CD8-positive, alpha-beta T cell (primary cell): ENCODE measurements at regions of chr7 and their contacts with region 1.

Region 1: GRCh38 chr7:44082541-44083207 is 344 bp upstream of the POLM start:
- DNase-seq: peak; percentile 94 to 100 (median 97)
- ATAC-seq: peak; percentile 93
- H3K4me3 ChIP-seq: peak overlapping the region; percentile 51 to 63
- H3K4me3 Mint-ChIP-seq: peak overlapping the region; percentile 88
- H3K27ac ChIP-seq: peak overlapping the region; percentile 54 to 78
- H3K27ac Mint-ChIP-seq: peak overlapping the region; percentile 82
- H3K4me1 ChIP-seq: peaks cover 26% of the 10 kb centered on the region
- H3K4me1 Mint-ChIP-seq: peaks cover 33% of the 10 kb centered on the region
- H3K27me3 ChIP-seq: no peaks in the 10 kb centered on the region
- H3K27me3 Mint-ChIP-seq: no peaks in the 10 kb centered on the region
- CTCF ChIP-seq: no peak

Region 2: GRCh38 chr7:43058271-43059066 is 1024.2 kb before region 1 on chr7:
- CTCF ChIA-PET with region 1: no interaction called
- POLR2A ChIA-PET with region 1: no interaction called
- intact Hi-C with region 1: no loop called
- DNase-seq: no peak
- ATAC-seq: no peak
- H3K4me3 ChIP-seq: no peak overlapping the region
- H3K4me3 Mint-ChIP-seq: no peak overlapping the region
- H3K27ac ChIP-seq: no peak overlapping the region
- H3K27ac Mint-ChIP-seq: no peak overlapping the region
- H3K4me1 ChIP-seq: no peaks in the 10 kb centered on the region
- H3K4me1 Mint-ChIP-seq: no peaks in the 10 kb centered on the region
- H3K27me3 ChIP-seq: no peaks in the 10 kb centered on the region
- H3K27me3 Mint-ChIP-seq: peaks cover 16% of the 10 kb centered on the region
- CTCF ChIP-seq: no peak

Region 3: GRCh38 chr7:44065436-44066118 is 17.1 kb before region 1 on chr7 and contains the start of gene PGAM2:
- CTCF ChIA-PET with region 1: interaction called, 3 read pairs
- POLR2A ChIA-PET with region 1: interaction called, 43 read pairs
- intact Hi-C with region 1: no loop called
- DNase-seq: no peak
- ATAC-seq: peak; percentile 67
- H3K4me3 ChIP-seq: no peak within 1 kb of the TSS
- H3K4me3 Mint-ChIP-seq: no peak within 1 kb of the TSS
- H3K27ac ChIP-seq: no peak within 1 kb of the TSS
- H3K27ac Mint-ChIP-seq: peak within 1 kb of the TSS; percentile 74
- H3K4me1 ChIP-seq: peaks cover 34% of the 10 kb centered on the region
- H3K4me1 Mint-ChIP-seq: peaks cover 38% of the 10 kb centered on the region
- H3K27me3 ChIP-seq: no peaks in the 10 kb centered on the region
- H3K27me3 Mint-ChIP-seq: no peaks in the 10 kb centered on the region
- CTCF ChIP-seq: no peak
- total RNA-seq, gene PGAM2: 1.1 to 1.5 TPM

Region 4: DNA sequence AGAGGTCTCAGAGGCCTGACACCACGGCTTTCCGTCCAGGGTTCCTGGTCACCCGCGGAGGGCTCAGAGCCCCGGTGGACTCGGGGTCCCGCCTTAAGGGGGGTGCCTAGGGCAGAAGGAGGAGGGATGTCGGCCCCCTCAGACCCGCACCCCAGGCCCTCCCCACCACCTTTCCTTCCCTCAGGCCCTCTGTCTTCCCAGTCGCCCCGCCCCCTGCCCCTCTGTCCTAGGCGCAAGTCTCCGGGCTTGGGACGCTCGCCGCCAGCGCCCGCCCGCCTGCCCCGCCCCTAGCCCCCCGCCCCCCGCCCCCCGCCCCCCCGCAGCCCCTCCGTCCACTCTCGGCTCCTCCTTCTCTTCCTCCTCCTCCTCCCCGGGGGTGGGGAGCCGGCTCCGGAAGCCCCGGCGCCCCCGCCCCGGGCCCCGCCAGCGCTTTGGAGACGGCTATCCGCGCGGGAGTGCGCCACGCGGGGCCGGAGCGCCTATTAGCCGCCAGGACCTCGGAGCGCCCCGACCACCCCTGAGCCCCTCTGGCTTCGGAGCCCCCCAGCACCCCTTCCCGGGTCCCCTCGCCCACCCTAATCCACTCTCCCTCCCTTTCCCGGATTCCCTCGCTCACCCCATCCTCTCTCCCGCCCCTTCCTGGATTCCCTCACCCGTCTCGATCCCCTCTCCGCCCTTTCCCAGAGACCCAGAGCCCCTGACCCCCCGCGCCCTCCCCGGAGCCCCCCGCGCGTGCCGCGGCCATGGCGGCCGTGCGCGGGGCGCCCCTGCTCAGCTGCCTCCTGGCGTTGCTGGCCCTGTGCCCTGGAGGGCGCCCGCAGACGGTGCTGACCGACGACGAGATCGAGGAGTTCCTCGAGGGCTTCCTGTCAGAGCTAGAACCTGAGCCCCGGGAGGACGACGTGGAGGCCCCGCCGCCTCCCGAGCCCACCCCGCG is 21.5 kb after region 1 on chr7 and contains the start of gene AEBP1:
- CTCF ChIA-PET with region 1: interaction called, 3 read pairs
- POLR2A ChIA-PET with region 1: no interaction called
- intact Hi-C with region 1: loop called in 1 of 2 experiments (anchors 1 kb)
- DNase-seq: peak in 7 of 9 experiments; percentile 19 to 63 (median 37)
- ATAC-seq: peak; percentile 64
- H3K4me3 ChIP-seq: peak within 1 kb of the TSS; percentile 43 to 63
- H3K4me3 Mint-ChIP-seq: peak within 1 kb of the TSS; percentile 77
- H3K27ac ChIP-seq: peak within 1 kb of the TSS in 1 of 2 experiments; percentile 11
- H3K27ac Mint-ChIP-seq: peak within 1 kb of the TSS; percentile 74
- H3K4me1 ChIP-seq: peaks cover 10% of the 10 kb centered on the region
- H3K4me1 Mint-ChIP-seq: peaks cover 19% of the 10 kb centered on the region
- H3K27me3 ChIP-seq: peaks cover 0 to 3% of the 10 kb centered on the region in 2 experiments
- H3K27me3 Mint-ChIP-seq: no peaks in the 10 kb centered on the region
- CTCF ChIP-seq: no peak
- total RNA-seq, gene AEBP1: 15.9 to 22.6 TPM

Region 5: GRCh38 chr7:44145969-44146911 is 63.6 kb after region 1 on chr7:
- CTCF ChIA-PET with region 1: no interaction called
- POLR2A ChIA-PET with region 1: no interaction called
- intact Hi-C with region 1: loop called in 1 of 2 experiments (anchors 1 kb)
- DNase-seq: peak in 8 of 9 experiments; percentile 10 to 74 (median 64)
- ATAC-seq: peak; percentile 61
- H3K4me3 ChIP-seq: peak overlapping the region; percentile 51 to 70
- H3K4me3 Mint-ChIP-seq: peak overlapping the region; percentile 81
- H3K27ac ChIP-seq: no peak overlapping the region
- H3K27ac Mint-ChIP-seq: peak overlapping the region; percentile 82
- H3K4me1 ChIP-seq: peaks cover 8% of the 10 kb centered on the region
- H3K4me1 Mint-ChIP-seq: peaks cover 10% of the 10 kb centered on the region
- H3K27me3 ChIP-seq: peaks cover 0 to 9% of the 10 kb centered on the region in 2 experiments
- H3K27me3 Mint-ChIP-seq: peaks cover 2% of the 10 kb centered on the region
- CTCF ChIP-seq: no peak

Region 6: GRCh38 chr7:44284216-44284615 is 201.5 kb after region 1 on chr7:
- CTCF ChIA-PET with region 1: no interaction called
- POLR2A ChIA-PET with region 1: no interaction called
- intact Hi-C with region 1: no loop called
- DNase-seq: peak in 1 of 9 experiments; percentile 3
- ATAC-seq: no peak
- H3K4me3 ChIP-seq: no peak overlapping the region
- H3K4me3 Mint-ChIP-seq: no peak overlapping the region
- H3K27ac ChIP-seq: no peak overlapping the region
- H3K27ac Mint-ChIP-seq: no peak overlapping the region
- H3K4me1 ChIP-seq: no peaks in the 10 kb centered on the region
- H3K4me1 Mint-ChIP-seq: no peaks in the 10 kb centered on the region
- H3K27me3 ChIP-seq: no peaks in the 10 kb centered on the region
- H3K27me3 Mint-ChIP-seq: no peaks in the 10 kb centered on the region
- CTCF ChIP-seq: no peak

Region 7: GRCh38 chr7:44477063-44477830 is 394.6 kb after region 1 on chr7:
- CTCF ChIA-PET with region 1: no interaction called
- POLR2A ChIA-PET with region 1: no interaction called
- intact Hi-C with region 1: loop called in 1 of 2 experiments (anchors 5 kb)
- DNase-seq: peak; percentile 33 to 83 (median 62)
- ATAC-seq: peak; percentile 99
- H3K4me3 ChIP-seq: no peak overlapping the region
- H3K4me3 Mint-ChIP-seq: no peak overlapping the region
- H3K27ac ChIP-seq: no peak overlapping the region
- H3K27ac Mint-ChIP-seq: peak overlapping the region; percentile 80
- H3K4me1 ChIP-seq: no peaks in the 10 kb centered on the region
- H3K4me1 Mint-ChIP-seq: peaks cover 51% of the 10 kb centered on the region
- H3K27me3 ChIP-seq: no peaks in the 10 kb centered on the region
- H3K27me3 Mint-ChIP-seq: no peaks in the 10 kb centered on the region
- CTCF ChIP-seq: peak; percentile 95